ENCODE measurements at regions of chr7 and their contacts with region 1.

Region 1: GRCh38 chr7:28291559-28291958 is 111.0 kb upstream of the JAZF1 start:
- DNase-seq: no peak
- ATAC-seq: no peak
- H3K4me3 ChIP-seq: no peak overlapping the region
- H3K27ac ChIP-seq: no peak overlapping the region
- H3K4me1 ChIP-seq: peaks cover 13% of the 10 kb centered on the region
- H3K27me3 ChIP-seq: no peaks in the 10 kb centered on the region
- CTCF ChIP-seq: no peak

Region 2: GRCh38 chr7:28830846-28831245 is 539.3 kb after region 1 on chr7:
- CTCF ChIA-PET with region 1: interaction called, 11 read pairs
- POLR2A ChIA-PET with region 1: no interaction called
- intact Hi-C with region 1: no loop called
- DNase-seq: no peak
- ATAC-seq: no peak
- H3K4me3 ChIP-seq: no peak overlapping the region
- H3K27ac ChIP-seq: no peak overlapping the region
- H3K4me1 ChIP-seq: peaks cover 7% of the 10 kb centered on the region
- H3K27me3 ChIP-seq: no peaks in the 10 kb centered on the region
- CTCF ChIP-seq: no peak

Measured in PC-3 (cell line).